ENCODE measurements at regions of chr5 and their contacts with region 1.

Region 1: DNA sequence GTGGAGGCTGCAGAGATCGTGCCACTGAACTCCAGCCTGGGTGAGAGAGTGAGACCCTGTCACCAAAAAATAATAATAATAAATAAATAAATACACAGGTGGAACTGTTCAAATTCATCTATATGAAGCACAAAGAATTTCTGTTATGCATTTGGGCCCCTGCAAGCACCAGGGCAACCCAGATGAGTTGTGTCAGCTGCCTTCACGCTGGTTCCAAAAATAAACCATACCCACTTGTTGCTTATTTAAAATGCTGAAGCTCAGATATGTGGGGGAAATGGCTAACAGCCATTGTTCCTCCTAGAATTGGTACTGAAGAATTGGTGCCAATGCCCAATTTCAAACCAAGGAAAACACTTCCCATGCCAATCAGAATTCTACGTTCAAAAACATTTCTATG is 10.5 kb upstream of the C5orf15 start:
- DNase-seq: no peak
- ATAC-seq: no peak
- H3K4me3 ChIP-seq: no peak overlapping the region
- H3K4me3 Mint-ChIP-seq: no peak overlapping the region
- H3K27ac ChIP-seq: no peak overlapping the region
- H3K27ac Mint-ChIP-seq: no peak overlapping the region
- H3K4me1 ChIP-seq: no peaks in the 10 kb centered on the region
- H3K4me1 Mint-ChIP-seq: peaks cover 0 to 6% (median 5%) of the 10 kb centered on the region in 3 donors
- H3K27me3 ChIP-seq: no peaks in the 10 kb centered on the region
- H3K27me3 Mint-ChIP-seq: no peaks in the 10 kb centered on the region

Region 2: GRCh38 chr5:134004592-134005375 is 25.8 kb after region 1 on chr5 and contains the start of gene VDAC1:
- CTCF ChIA-PET with region 1: interaction called, 3 to 10 read pairs
- POLR2A ChIA-PET with region 1: interaction called in 1 of 2 experiments, 3 read pairs
- DNase-seq: peak; percentile 69 to 95 (median 86)
- ATAC-seq: peak; percentile 82 to 89 (median 86)
- H3K4me3 ChIP-seq: peak within 1 kb of the TSS; percentile 79 to 84
- H3K4me3 Mint-ChIP-seq: peak within 1 kb of the TSS; percentile 79 to 91 (median 86)
- H3K27ac ChIP-seq: peak within 1 kb of the TSS; percentile 95
- H3K27ac Mint-ChIP-seq: peak within 1 kb of the TSS; percentile 90 to 91
- H3K4me1 ChIP-seq: peaks cover 9 to 51% of the 10 kb centered on the region in 2 experiments
- H3K4me1 Mint-ChIP-seq: peaks cover 42 to 47% (median 45%) of the 10 kb centered on the region in 3 donors
- H3K27me3 ChIP-seq: peaks cover 0 to 2% of the 10 kb centered on the region in 2 experiments
- H3K27me3 Mint-ChIP-seq: no peaks in the 10 kb centered on the region
- total RNA-seq, gene VDAC1: 45.8 to 58.7 (median 54.6) TPM

Measured in T-cell (primary cell).